ENCODE measurements at regions of chr20 and their contacts with region 1.

Region 1: DNA sequence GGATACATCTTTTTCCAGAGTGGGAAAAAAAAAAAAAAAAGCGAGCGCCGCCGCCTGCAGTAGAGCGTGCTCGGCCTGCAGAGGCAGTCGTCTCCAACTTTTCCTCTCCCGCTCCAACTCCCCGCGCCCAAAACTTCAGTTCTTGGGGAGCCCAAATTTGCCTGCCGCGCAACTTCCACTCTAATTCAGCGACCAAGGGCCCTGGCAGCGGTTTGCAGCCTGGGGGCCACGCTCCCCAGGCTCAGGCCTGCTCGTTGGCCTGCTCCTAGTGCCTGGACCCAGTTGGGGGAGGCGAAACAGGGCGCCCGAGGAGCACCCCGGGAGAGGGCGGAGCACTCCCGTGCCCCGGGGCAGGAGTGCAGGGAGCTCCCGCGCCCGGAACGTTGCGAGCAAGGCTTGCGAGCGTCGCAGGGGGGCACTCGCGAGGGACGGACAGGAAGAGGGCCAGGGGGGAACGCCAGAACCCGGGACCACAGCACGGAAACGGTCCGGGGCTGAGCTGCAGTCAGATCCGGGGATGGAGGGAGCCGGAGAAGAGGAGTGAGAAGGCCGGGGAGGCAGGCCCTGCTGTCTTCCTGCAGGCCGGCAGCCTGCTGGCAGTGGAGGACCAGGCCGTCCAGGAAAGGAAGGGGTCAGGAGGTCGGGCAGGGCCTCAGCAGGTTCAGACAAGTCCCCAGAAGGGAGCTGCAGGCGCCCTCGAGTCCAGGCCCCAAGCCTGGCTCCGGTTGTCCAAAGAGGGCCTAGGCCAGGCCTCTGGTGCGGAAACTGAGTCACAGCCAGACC is at the start of gene STX16:
- DNase-seq: peak; percentile 95
- ATAC-seq: peak; percentile 84
- H3K4me3 Mint-ChIP-seq: peak within 1 kb of the TSS; percentile 100
- H3K27ac Mint-ChIP-seq: peak within 1 kb of the TSS; percentile 100
- H3K4me1 Mint-ChIP-seq: peaks cover 19% of the 10 kb centered on the region
- H3K27me3 Mint-ChIP-seq: no peaks in the 10 kb centered on the region
- total RNA-seq, gene STX16: 101 to 110 TPM

Region 2: DNA sequence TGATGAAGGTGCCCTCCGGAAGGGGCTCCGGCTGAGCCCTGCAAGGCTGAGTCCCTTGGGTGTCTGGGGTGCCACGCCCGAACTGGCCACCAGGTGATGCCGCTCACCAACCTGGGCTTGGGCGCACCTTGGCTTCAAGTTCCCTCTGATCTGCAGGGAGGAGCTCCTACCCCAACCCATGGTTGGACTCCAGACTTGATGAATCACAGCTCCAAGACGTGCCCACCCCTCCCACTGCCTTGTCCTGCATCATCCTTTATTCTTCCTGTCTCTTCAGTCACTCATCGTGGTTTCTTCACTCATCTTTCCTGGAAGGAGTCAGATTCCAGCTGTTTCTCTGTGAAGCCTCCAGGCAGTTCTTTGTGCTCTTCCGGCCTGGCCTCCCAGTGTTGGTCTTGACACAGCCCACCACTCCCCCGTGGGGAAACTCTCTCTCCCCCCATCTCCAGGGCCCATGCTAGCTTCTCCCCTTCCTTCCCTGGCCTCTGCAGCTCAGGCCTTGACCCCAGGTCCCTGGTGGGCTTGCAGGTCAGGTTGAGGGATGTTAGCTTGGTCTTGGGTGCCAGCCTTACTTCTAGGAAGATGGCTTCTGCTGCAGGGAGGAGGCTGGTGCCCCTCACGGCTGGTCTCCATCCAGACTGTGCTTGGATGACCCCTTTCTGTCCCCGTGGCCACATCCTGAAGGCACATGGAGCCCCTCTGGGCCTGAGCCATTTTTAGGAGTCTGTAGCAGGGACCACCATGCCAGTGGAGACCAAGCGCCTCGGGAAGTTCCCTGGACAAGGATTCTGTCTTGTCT is 1028.2 kb before region 1 on chr20:
- CTCF ChIA-PET with region 1: no interaction called
- POLR2A ChIA-PET with region 1: no interaction called
- intact Hi-C with region 1: loop called in 1 of 2 experiments (anchors 2 kb)
- DNase-seq: peak; percentile 86
- ATAC-seq: peak; percentile 10
- H3K4me3 Mint-ChIP-seq: peak overlapping the region; percentile 36
- H3K27ac Mint-ChIP-seq: peak overlapping the region; percentile 19
- H3K4me1 Mint-ChIP-seq: peaks cover 64% of the 10 kb centered on the region
- H3K27me3 Mint-ChIP-seq: no peaks in the 10 kb centered on the region

Region 3: GRCh38 chr20:58388882-58389323 is 262.1 kb before region 1 on chr20 and contains the start of gene VAPB:
- CTCF ChIA-PET with region 1: no interaction called
- POLR2A ChIA-PET with region 1: no interaction called
- intact Hi-C with region 1: loop called in 1 of 2 experiments (anchors 1 kb)
- DNase-seq: peak; percentile 98
- ATAC-seq: peak; percentile 99
- H3K4me3 Mint-ChIP-seq: peak within 1 kb of the TSS; percentile 100
- H3K27ac Mint-ChIP-seq: peak within 1 kb of the TSS; percentile 97
- H3K4me1 Mint-ChIP-seq: peaks cover 39% of the 10 kb centered on the region
- H3K27me3 Mint-ChIP-seq: peaks cover 2% of the 10 kb centered on the region
- total RNA-seq, gene VAPB: 43.9 to 54.5 TPM

Region 4: GRCh38 chr20:58433764-58434163 is 217.2 kb before region 1 on chr20:
- CTCF ChIA-PET with region 1: no interaction called
- POLR2A ChIA-PET with region 1: no interaction called
- intact Hi-C with region 1: no loop called
- DNase-seq: no peak
- ATAC-seq: no peak
- H3K4me3 Mint-ChIP-seq: no peak overlapping the region
- H3K27ac Mint-ChIP-seq: no peak overlapping the region
- H3K4me1 Mint-ChIP-seq: peaks cover 44% of the 10 kb centered on the region
- H3K27me3 Mint-ChIP-seq: no peaks in the 10 kb centered on the region

Region 5: GRCh38 chr20:58692594-58693226 is 41.7 kb after region 1 on chr20 and contains the start of gene NPEPL1:
- CTCF ChIA-PET with region 1: interaction called, 3 read pairs
- POLR2A ChIA-PET with region 1: interaction called, 3 read pairs
- intact Hi-C with region 1: loop called (anchors 1 to 5 kb)
- DNase-seq: peak; percentile 82
- ATAC-seq: peak; percentile 99
- H3K4me3 Mint-ChIP-seq: peak within 1 kb of the TSS; percentile 63
- H3K27ac Mint-ChIP-seq: peak within 1 kb of the TSS; percentile 53
- H3K4me1 Mint-ChIP-seq: peaks cover 13% of the 10 kb centered on the region
- H3K27me3 Mint-ChIP-seq: no peaks in the 10 kb centered on the region
- total RNA-seq, gene NPEPL1: 13.6 to 15.2 TPM

Region 6: DNA sequence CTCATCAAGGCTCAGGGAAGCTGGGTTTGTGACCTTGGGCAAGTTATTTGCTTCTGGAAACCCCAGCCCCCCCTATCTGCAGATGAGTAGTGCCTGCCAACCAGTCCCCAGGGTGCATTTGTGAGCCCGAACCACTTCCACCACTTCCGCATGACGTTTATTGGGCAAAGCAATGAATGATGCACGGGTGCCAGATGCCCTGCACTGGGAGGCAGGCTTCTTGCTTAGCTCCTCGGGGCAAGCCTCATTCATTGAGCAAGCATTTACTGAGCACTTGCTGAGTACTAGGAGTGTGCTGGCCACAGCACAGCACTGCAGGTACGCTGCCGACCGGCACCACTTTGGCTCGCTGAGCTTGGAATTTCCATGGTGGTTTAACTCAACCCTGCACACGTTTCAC is 139.5 kb after region 1 on chr20:
- CTCF ChIA-PET with region 1: no interaction called
- POLR2A ChIA-PET with region 1: no interaction called
- intact Hi-C with region 1: no loop called
- DNase-seq: no peak
- ATAC-seq: no peak
- H3K4me3 Mint-ChIP-seq: no peak overlapping the region
- H3K27ac Mint-ChIP-seq: no peak overlapping the region
- H3K4me1 Mint-ChIP-seq: no peaks in the 10 kb centered on the region
- H3K27me3 Mint-ChIP-seq: peaks cover 9% of the 10 kb centered on the region

Region 7: GRCh38 chr20:58980700-58981627 is 330.0 kb after region 1 on chr20 and contains the start of gene NELFCD:
- CTCF ChIA-PET with region 1: no interaction called
- POLR2A ChIA-PET with region 1: no interaction called
- intact Hi-C with region 1: loop called in 1 of 2 experiments (anchors 1 kb)
- DNase-seq: peak; percentile 94
- ATAC-seq: peak; percentile 87
- H3K4me3 Mint-ChIP-seq: peak within 1 kb of the TSS; percentile 85
- H3K27ac Mint-ChIP-seq: peak within 1 kb of the TSS; percentile 89
- H3K4me1 Mint-ChIP-seq: peaks cover 32% of the 10 kb centered on the region
- H3K27me3 Mint-ChIP-seq: no peaks in the 10 kb centered on the region
- total RNA-seq, gene NELFCD: 111 to 121 TPM

Region 8: DNA sequence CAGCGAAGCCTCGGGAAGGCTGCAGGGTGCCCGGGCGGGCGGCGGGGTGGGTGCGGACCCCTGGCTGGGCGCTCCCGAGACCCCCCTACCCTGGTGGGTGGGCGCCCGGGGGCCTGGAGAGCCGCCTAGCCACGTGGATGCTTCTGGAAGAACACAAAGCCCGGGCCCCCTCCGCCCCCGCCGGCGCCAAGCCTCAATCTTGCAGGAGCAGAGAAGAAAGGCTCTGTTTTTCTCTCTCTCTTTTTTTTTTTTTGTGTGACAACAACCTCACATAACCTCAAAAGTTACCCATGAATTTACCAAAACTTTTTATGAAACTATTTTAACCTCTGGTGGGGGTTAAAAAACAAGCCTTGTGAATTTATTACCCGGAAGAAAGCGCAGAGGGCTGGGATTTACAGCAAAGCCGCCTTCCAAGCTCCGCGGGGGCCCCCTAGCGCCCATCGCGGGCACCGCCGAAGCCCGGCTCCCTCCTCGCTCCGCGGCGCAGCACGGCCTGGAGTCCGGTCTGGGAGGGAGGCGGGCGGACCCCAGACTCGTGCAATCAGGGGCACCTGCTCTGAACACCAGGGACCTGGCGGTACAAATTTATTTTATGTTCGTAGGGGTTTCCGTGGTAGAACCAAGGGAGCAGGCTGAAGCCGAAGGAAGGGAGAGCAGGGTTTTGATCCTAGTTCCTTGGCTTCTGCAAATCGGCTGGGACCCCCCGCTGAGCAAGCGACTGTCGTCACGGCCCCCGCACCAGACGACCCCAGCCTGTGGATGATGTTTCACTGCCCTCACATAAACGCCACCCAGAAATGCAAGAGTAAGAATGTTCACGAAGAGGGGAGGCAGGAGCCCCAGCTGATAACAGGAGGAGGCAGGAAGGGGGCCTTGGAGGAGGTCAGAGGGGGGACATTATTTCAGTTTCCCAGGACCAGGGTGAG is 571.5 kb after region 1 on chr20:
- CTCF ChIA-PET with region 1: no interaction called
- POLR2A ChIA-PET with region 1: no interaction called
- intact Hi-C with region 1: loop called in 1 of 2 experiments (anchors 1 kb)
- DNase-seq: peak; percentile 91
- ATAC-seq: peak; percentile 95
- H3K4me3 Mint-ChIP-seq: peak overlapping the region; percentile 65
- H3K27ac Mint-ChIP-seq: peak overlapping the region; percentile 81
- H3K4me1 Mint-ChIP-seq: peaks cover 31% of the 10 kb centered on the region
- H3K27me3 Mint-ChIP-seq: no peaks in the 10 kb centered on the region

Measured in activated CD4-positive, alpha-beta T cell treated with anti-CD3 and anti-CD28 coated beads for 36 hours (primary cell).